ENCODE measurements at regions of chr20 and their contacts with region 1.

Region 1: DNA sequence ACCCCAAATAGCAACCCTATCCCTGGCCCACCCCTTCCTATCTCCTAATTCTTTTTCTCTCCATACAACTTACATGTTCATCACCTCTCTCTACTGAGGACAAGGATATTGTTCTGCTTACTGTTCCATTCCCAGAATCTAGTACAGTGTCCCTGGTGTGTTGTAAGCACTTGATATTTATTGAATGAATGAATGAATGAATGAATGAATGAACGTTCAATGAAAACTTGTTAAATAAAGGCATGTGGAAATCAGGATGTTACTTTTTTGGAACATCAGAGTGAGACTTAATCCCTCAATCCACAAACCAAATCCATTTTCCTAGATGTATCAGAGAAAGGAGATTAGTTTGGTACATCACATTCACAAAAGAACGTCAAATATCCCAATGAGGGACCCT is 6.8 kb upstream of the JPH2 start:
- DNase-seq: no peak
- ATAC-seq: no peak
- H3K4me3 ChIP-seq: no peak overlapping the region
- H3K27ac ChIP-seq: no peak overlapping the region
- H3K4me1 ChIP-seq: no peaks in the 10 kb centered on the region
- H3K27me3 ChIP-seq: no peaks in the 10 kb centered on the region
- CTCF ChIP-seq: no peak

Region 2: DNA sequence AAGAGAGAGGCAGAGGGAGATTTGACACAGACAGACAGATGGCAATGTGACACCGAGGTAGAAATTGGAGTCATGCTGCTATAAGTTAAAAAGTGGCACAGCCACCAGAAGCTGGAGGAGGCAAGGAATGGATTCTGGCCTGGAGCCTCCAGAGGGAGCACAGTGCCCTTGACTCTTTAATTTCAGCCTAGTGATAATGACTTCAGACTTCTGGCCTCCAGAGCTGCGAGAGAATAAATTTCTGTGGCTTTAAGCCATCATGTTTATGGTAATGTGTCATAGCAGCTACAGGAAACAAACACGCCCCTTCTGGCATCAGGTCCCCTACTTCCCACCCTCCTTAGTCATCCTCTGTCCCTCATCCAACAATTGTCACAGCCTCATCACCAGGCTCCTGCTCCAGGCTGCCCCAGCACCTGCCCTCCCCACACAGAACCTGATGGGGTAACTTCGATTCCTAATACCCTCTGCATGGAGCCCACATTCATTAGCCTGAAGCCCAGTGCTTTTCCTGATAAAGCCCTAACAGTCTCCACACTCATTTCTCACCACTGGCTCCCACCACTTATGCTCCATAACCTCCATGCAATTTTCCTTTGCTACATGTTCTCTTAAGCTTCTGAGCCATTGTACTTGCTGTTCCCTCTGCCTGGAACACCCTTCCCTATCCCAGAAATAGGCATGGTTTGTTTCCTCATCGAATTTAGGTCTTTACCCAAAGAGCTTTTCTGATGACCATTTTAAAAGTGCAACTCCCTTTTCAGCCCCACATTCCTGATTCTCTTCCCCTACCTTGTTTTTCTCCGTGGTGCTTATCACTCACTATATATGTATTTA is 348.8 kb before region 1 on chr20:
- intact Hi-C with region 1: no loop called
- DNase-seq: no peak
- ATAC-seq: peak; percentile 58
- H3K4me3 ChIP-seq: no peak overlapping the region
- H3K27ac ChIP-seq: peak overlapping the region; percentile 39
- H3K4me1 ChIP-seq: peaks cover 23% of the 10 kb centered on the region
- H3K27me3 ChIP-seq: no peaks in the 10 kb centered on the region
- CTCF ChIP-seq: peak; percentile 35

Region 3: GRCh38 chr20:44115762-44116644 is 77.8 kb before region 1 on chr20:
- intact Hi-C with region 1: loop called (anchors 5 kb)
- DNase-seq: no peak
- ATAC-seq: no peak
- H3K4me3 ChIP-seq: no peak overlapping the region
- H3K27ac ChIP-seq: no peak overlapping the region
- H3K4me1 ChIP-seq: no peaks in the 10 kb centered on the region
- H3K27me3 ChIP-seq: peaks cover 20% of the 10 kb centered on the region
- CTCF ChIP-seq: no peak

Region 4: GRCh38 chr20:44326391-44327159 is 132.8 kb after region 1 on chr20:
- intact Hi-C with region 1: no loop called
- DNase-seq: peak; percentile 60
- ATAC-seq: peak; percentile 45
- H3K4me3 ChIP-seq: peak overlapping the region; percentile 25
- H3K27ac ChIP-seq: no peak overlapping the region
- H3K4me1 ChIP-seq: peaks cover 5% of the 10 kb centered on the region
- H3K27me3 ChIP-seq: peaks cover 36% of the 10 kb centered on the region
- CTCF ChIP-seq: no peak

Measured in upper lobe of right lung (tissue), 1 donor.